Activated naive CD4-positive, alpha-beta T cell treated with anti-CD3 and anti-CD28 coated beads for 36 hours (primary cell): ENCODE measurements at regions of chr3 and their contacts with region 1.

Region 1: DNA sequence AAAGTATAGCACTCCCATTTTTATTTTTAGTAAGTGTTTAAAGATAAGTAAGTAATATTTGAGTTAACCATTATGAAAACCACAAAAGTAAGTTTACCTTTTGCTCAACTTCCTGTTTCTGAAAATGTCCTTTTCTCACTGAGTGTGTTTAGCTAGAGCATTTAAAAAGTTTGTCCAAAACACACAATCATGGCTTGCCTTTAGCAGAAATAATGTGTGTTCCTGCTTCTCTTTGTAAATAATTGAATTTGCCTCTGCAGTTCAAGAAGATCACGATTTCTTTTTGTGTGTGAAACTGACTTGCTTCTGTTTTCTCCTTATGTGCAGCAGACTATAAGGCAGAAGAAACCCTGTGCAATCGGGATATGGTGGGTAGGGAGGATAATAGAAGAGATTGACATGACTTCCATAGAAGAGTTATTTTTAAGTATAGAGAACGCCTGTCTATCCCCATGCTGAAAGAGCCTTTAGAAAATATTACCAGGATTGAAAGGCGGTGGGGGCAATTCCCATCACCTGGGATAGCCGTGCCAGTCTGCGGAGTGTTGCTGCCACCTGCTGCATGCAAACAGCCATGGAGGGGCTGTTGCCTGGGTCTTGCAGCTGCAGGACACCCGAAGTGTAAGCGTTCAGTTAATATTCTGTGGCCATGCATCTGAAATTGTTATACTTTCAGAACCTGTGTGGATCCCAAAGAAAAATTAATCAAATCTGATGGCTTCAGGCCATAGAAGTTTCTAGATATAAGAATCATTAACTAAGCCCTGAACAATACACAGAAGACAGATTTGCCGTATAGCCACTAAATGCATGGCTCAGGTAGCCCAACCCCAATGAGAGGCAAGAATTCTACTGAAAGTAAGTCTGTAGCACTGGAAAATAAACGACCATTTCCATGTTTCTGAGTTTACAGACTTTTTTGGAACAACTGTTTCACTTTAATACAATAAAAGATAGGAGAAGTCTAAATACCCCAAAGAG is 2.4 kb upstream of the CD96 start:
- DNase-seq: peak; percentile 73
- H3K4me3 Mint-ChIP-seq: peak overlapping the region; percentile 53
- H3K27ac Mint-ChIP-seq: peak overlapping the region; percentile 79
- H3K4me1 Mint-ChIP-seq: peaks cover 63% of the 10 kb centered on the region
- H3K27me3 Mint-ChIP-seq: no peaks in the 10 kb centered on the region

Region 2: GRCh38 chr3:110314512-110315114 is 1225.0 kb before region 1 on chr3:
- CTCF ChIA-PET with region 1: no interaction called
- intact Hi-C with region 1: loop called (anchors 2 kb)
- DNase-seq: peak; percentile 66
- H3K4me3 Mint-ChIP-seq: no peak overlapping the region
- H3K27ac Mint-ChIP-seq: no peak overlapping the region
- H3K4me1 Mint-ChIP-seq: peaks cover 2% of the 10 kb centered on the region
- H3K27me3 Mint-ChIP-seq: no peaks in the 10 kb centered on the region

Region 3: GRCh38 chr3:111299068-111299672 is 240.5 kb before region 1 on chr3:
- CTCF ChIA-PET with region 1: interaction called, 4 read pairs
- intact Hi-C with region 1: loop called (anchors 1 kb)
- DNase-seq: no peak
- H3K4me3 Mint-ChIP-seq: no peak overlapping the region
- H3K27ac Mint-ChIP-seq: no peak overlapping the region
- H3K4me1 Mint-ChIP-seq: peaks cover 12% of the 10 kb centered on the region
- H3K27me3 Mint-ChIP-seq: no peaks in the 10 kb centered on the region

Region 4: DNA sequence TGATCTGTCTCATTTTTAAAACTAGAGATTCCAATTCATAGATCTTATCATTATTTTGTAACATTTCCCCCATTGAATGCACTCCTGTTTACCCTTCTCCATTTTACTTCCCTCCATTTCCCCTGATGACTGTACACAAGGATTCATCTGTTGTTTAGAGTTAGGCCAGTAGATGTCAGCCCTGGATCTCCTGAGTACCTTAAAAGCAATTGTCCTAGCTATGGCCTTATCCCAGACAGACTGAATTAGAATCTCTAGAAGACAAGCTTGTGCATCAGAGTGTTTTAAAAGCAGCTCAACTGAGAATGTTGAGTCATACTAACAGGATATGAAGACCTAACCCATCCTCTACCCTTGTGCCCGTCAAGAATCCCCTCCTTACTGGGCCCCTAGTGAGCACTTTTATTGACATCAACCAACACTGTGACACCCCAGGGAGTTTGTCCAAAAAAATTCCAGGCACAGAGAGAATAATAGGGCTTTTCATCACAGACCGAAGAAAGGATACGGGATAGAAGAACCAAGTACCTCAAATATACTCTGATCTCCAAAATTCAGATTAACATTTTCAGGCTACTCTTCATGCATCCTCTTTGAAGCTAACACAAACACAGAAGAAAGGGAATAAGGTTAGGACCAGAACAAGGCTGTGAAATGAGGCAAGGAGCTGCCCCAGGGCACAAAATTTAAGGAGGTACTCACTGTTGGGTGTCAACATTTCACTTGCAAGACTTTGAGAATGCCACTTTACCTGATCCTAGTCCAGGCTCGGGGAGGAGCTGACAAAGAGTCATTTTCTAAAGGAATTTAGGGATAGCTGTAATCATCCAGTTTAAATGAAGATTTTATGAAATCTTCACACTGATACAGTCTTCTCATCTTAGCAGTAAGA is 38.4 kb after region 1 on chr3:
- CTCF ChIA-PET with region 1: interaction called, 14 read pairs
- intact Hi-C with region 1: loop called (anchors 1 kb)
- DNase-seq: peak; percentile 38
- H3K4me3 Mint-ChIP-seq: peak overlapping the region; percentile 18
- H3K27ac Mint-ChIP-seq: peak overlapping the region; percentile 90
- H3K4me1 Mint-ChIP-seq: peaks cover 75% of the 10 kb centered on the region
- H3K27me3 Mint-ChIP-seq: no peaks in the 10 kb centered on the region

Region 5: GRCh38 chr3:111668912-111669488 is 129.4 kb after region 1 on chr3:
- CTCF ChIA-PET with region 1: interaction called, 3 read pairs
- intact Hi-C with region 1: loop called (anchors 1 kb)
- DNase-seq: no peak
- H3K4me3 Mint-ChIP-seq: no peak overlapping the region
- H3K27ac Mint-ChIP-seq: peak overlapping the region; percentile 76
- H3K4me1 Mint-ChIP-seq: peaks cover 87% of the 10 kb centered on the region
- H3K27me3 Mint-ChIP-seq: no peaks in the 10 kb centered on the region

Region 6: DNA sequence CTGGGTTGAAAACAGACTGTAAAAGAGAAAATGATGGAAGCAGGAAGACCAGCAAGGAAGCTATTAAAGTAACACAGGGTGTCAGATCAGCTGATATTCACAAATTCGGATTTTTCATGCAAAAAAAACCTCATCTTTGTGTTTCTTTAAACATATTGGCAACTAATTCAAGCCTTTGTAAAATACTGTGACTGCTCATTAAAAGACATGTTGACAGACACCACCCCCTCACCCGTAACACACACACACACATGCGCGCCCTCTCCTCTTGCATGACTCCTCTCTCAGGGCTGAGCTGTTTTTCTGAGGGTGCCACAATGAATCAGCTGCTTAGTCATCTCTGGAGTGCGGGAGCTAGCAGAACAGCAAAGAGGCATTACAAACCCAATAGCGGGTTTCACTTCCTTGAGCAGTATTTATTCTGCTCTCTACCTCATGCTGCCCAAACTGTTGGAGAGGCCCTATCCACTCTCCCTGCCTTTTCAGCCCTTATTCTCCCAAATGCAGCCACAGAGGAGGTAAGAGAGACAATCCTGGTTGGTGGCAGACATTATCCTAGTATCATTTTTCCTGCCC is 1137.1 kb after region 1 on chr3:
- CTCF ChIA-PET with region 1: no interaction called
- intact Hi-C with region 1: loop called (anchors 10 kb)
- DNase-seq: peak; percentile 97
- H3K4me3 Mint-ChIP-seq: peak overlapping the region; percentile 14
- H3K27ac Mint-ChIP-seq: peak overlapping the region; percentile 54
- H3K4me1 Mint-ChIP-seq: peaks cover 42% of the 10 kb centered on the region
- H3K27me3 Mint-ChIP-seq: peaks cover 14% of the 10 kb centered on the region